H1 (cell line): ENCODE measurements at regions of chr4 and their contacts with region 1.

Region 1: DNA sequence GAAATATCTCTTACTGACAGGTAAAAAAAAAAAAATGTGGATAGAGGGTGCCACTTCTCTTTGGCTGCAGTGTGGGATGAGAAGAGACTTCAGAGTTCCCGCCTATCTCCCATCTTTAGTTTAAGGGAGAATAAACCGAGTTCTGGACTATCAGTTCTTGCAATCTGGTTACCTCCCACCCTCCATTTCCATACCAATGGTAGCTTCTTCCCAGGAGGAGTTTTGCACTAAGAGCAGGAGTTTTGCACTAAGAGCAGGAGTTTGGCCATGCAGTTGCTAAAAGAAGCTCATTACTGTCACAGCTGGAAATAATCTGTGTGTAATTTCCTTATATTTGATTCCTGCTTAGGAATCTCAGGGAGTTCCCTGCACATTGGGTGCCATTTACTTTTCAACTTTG is 10.8 kb upstream of the GUCY1B1 start:
- DNase-seq: no peak
- H3K4me3 ChIP-seq: no peak overlapping the region
- H3K27ac ChIP-seq: no peak overlapping the region
- H3K4me1 ChIP-seq: no peaks in the 10 kb centered on the region
- H3K27me3 ChIP-seq: no peaks in the 10 kb centered on the region
- CTCF ChIP-seq: no peak
- EP300 ChIP-seq: no peak
- POLR2A ChIP-seq: no peak
- RAD21 ChIP-seq: no peak

Region 2: DNA sequence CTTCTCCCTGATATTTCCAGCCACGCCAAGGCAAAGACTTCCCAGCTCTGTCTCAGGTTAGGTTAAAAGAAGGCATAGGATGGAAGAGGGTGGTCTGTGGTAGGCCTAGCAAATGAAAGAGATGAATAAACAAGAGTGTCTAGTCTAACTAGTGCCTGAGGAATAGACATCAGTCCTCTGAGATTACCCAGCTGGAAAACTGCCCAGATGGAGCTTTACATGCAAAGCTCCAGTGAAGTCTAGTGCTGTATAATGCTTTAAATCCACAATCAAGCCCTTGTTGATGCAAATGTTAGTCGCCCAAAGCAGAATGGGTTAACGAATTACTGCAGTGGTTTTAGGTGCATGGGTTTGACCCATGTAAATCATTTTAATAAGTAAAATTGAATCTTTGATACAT is 14.0 kb before region 1 on chr4:
- CTCF ChIA-PET with region 1: no interaction called
- POLR2A ChIA-PET with region 1: no interaction called
- DNase-seq: no peak
- H3K4me3 ChIP-seq: no peak overlapping the region
- H3K27ac ChIP-seq: no peak overlapping the region
- H3K4me1 ChIP-seq: no peaks in the 10 kb centered on the region
- H3K27me3 ChIP-seq: no peaks in the 10 kb centered on the region
- CTCF ChIP-seq: no peak
- EP300 ChIP-seq: no peak
- POLR2A ChIP-seq: no peak
- RAD21 ChIP-seq: no peak

Region 3: DNA sequence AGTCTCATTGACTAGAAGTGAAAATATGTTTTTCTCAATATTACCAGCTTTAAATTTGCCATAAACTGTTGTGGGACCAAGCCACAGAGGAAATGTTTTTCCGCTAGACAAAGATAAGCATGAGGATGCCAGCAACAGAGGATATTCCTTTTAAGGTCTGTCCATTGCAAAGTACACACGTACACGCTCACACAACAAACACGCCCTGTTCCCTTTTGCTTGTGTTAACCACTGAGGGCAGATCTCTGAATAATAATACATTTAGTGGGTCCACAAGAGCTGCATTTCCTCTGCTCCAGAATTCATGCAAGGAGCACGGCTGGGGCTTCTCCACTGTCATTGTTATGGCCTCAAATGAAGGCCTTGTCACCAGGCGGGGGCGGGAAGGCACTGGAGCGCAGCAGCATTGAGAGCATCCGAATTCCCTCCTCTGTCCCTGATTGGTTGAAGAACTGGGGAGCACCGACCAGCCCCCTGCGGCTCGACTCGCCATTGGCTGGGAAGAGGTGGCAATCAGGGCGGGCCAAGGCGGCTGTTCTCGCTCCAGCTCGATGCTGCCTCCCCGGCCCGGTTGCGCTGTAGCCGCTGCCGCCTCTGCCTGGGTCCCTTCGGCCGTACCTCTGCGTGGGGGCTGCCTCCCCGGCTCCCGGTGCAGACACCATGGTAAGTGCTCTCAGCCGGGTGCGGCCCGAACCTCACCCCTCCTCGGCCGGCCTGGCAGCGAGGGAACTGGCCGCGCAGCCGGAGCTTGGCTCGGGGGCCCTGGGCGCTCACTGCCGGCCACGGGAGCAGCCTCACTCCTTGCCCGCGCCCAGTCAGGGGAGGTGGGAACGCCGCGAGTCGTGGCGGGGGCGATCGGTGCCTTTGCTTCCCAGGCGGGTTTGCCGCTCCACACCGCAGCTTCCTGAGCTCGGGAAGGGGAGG is 10.7 kb after region 1 on chr4 and contains the start of gene GUCY1B1:
- CTCF ChIA-PET with region 1: interaction called, 14 read pairs
- POLR2A ChIA-PET with region 1: no interaction called
- DNase-seq: peak; percentile 83 to 89
- H3K4me3 ChIP-seq: peak within 1 kb of the TSS; percentile 49 to 75 (median 52)
- H3K27ac ChIP-seq: no peak within 1 kb of the TSS
- H3K4me1 ChIP-seq: peaks cover 0 to 6% (median 0%) of the 10 kb centered on the region in 4 experiments; a peak in 2 of 7 replicates
- H3K27me3 ChIP-seq: peaks cover 3 to 16% (median 9%) of the 10 kb centered on the region in 4 experiments
- CTCF ChIP-seq: peak; percentile 20 to 44 (median 40)
- EP300 ChIP-seq: peak in 1 of 2 experiments; percentile 19; a peak in 1 of 3 replicates
- POLR2A ChIP-seq: no peak
- RAD21 ChIP-seq: peak; percentile 34 to 37; a peak in 3 of 4 replicates
- total RNA-seq, gene GUCY1B1: 2.1 and 2.9 TPM in 2 replicates